ENCODE measurements at regions of chr4 and their contacts with region 1.

Region 1: GRCh38 chr4:82284858-82285805 is 88.7 kb downstream of the HNRNPD start:
- DNase-seq: peak; percentile 98 to 100
- ATAC-seq: peak; percentile 89 to 96 (median 91)
- H3K4me3 ChIP-seq: peak overlapping the region; percentile 53
- H3K4me3 Mint-ChIP-seq: peak overlapping the region; percentile 82
- H3K27ac ChIP-seq: peak overlapping the region; percentile 87
- H3K27ac Mint-ChIP-seq: peak overlapping the region; percentile 49 to 79
- H3K4me1 ChIP-seq: peaks cover 12% of the 10 kb centered on the region
- H3K4me1 Mint-ChIP-seq: peaks cover 14 to 19% of the 10 kb centered on the region in 2 donors
- H3K27me3 ChIP-seq: no peaks in the 10 kb centered on the region
- H3K27me3 Mint-ChIP-seq: peaks cover 9 to 15% of the 10 kb centered on the region in 2 donors
- CTCF ChIP-seq: peak; percentile 96

Region 2: DNA sequence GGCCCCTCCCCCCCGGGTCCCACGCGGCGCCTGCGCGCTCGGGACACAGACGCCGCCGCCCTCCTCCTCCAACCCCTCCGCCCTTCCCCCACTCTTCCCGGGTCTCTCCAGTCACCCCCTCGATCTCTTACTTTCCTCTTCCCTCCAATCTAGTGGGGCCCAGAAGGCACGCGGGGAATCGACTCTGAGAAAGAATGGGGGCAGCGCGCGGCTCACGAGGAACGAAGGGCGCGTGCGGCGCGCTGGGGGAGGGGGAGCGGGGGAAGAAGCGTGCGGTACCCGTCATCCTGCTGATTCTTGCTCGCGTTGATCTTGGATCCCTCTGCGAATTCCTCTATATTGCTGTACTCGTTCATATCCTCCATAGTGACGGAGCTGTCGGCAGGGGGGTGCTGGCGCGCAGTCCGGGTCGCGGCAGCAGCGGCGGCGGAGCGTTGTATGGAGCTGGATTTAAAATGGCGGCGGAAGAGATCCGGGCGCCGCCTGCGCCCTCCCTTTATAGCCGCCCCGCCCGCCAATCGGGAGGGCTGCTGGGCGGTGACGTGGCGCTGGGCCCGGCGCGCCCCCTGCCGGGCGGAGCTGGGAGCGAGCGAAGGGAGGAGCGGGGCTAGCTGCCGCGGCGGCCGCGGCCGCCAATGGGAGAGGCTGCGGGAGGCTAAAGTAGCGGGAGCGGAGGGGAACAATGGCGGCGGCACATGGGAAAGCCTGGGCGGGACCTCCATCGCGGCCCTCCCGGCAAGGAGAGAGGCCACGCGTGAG is 144.0 kb after region 1 on chr4:
- intact Hi-C with region 1: loop called (anchors 2 kb)
- DNase-seq: peak; percentile 94 to 97
- ATAC-seq: peak; percentile 67 to 87 (median 70)
- H3K4me3 ChIP-seq: peak overlapping the region; percentile 100
- H3K4me3 Mint-ChIP-seq: peak overlapping the region; percentile 100
- H3K27ac ChIP-seq: peak overlapping the region; percentile 100
- H3K27ac Mint-ChIP-seq: peak overlapping the region; percentile 96
- H3K4me1 ChIP-seq: peaks cover 15% of the 10 kb centered on the region
- H3K4me1 Mint-ChIP-seq: peaks cover 46 to 60% of the 10 kb centered on the region in 2 donors
- H3K27me3 ChIP-seq: no peaks in the 10 kb centered on the region
- H3K27me3 Mint-ChIP-seq: no peaks in the 10 kb centered on the region
- CTCF ChIP-seq: peak; percentile 94

Measured in natural killer cell (primary cell).